CD8-positive, alpha-beta T cell (primary cell): ENCODE measurements at regions of chr19 and their contacts with region 1.

Region 1: GRCh38 chr19:48646001-48646721 is at the start of gene CA11:
- DNase-seq: peak; percentile 87 to 97 (median 92)
- ATAC-seq: peak; percentile 84
- H3K4me3 ChIP-seq: peak within 1 kb of the TSS; percentile 58 to 98
- H3K4me3 Mint-ChIP-seq: peak within 1 kb of the TSS; percentile 93
- H3K27ac ChIP-seq: peak within 1 kb of the TSS; percentile 80 to 88
- H3K27ac Mint-ChIP-seq: peak within 1 kb of the TSS; percentile 99
- H3K4me1 ChIP-seq: peaks cover 32% of the 10 kb centered on the region
- H3K4me1 Mint-ChIP-seq: peaks cover 47% of the 10 kb centered on the region
- H3K27me3 ChIP-seq: no peaks in the 10 kb centered on the region
- H3K27me3 Mint-ChIP-seq: no peaks in the 10 kb centered on the region
- CTCF ChIP-seq: peak; percentile 77
- total RNA-seq, gene CA11: 10.3 to 11.2 TPM

Region 2: GRCh38 chr19:48218997-48219396 is 427.2 kb before region 1 on chr19:
- CTCF ChIA-PET with region 1: no interaction called
- POLR2A ChIA-PET with region 1: no interaction called
- intact Hi-C with region 1: no loop called
- DNase-seq: no peak
- ATAC-seq: no peak
- H3K4me3 ChIP-seq: no peak overlapping the region
- H3K4me3 Mint-ChIP-seq: no peak overlapping the region
- H3K27ac ChIP-seq: no peak overlapping the region
- H3K27ac Mint-ChIP-seq: no peak overlapping the region
- H3K4me1 ChIP-seq: peaks cover 4% of the 10 kb centered on the region
- H3K4me1 Mint-ChIP-seq: peaks cover 14% of the 10 kb centered on the region
- H3K27me3 ChIP-seq: no peaks in the 10 kb centered on the region
- H3K27me3 Mint-ChIP-seq: no peaks in the 10 kb centered on the region
- CTCF ChIP-seq: no peak

Region 3: DNA sequence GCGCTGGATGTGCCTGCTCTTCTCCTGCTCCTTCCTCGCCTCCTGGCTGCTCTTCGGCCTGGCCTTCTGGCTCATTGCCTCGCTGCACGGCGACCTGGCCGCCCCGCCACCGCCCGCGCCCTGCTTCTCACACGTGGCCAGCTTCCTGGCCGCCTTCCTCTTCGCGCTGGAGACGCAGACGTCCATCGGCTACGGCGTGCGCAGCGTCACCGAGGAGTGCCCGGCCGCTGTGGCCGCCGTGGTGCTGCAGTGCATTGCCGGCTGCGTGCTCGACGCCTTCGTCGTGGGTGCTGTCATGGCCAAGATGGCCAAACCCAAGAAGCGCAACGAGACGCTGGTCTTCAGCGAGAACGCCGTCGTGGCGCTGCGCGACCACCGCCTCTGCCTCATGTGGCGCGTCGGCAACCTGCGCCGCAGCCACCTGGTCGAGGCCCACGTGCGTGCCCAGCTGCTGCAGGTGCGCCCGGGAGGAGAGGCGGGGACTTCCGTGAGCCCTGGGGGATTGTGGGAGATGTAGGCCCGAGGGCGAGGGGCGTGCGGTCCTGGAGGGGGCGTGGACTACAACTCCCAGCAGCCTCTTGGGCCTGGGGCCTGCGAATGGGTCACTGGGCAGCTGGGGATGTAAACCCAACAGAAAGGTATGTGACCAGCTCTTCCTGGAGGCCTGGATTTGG is 184.0 kb before region 1 on chr19:
- CTCF ChIA-PET with region 1: no interaction called
- POLR2A ChIA-PET with region 1: no interaction called
- intact Hi-C with region 1: no loop called
- DNase-seq: peak in 1 of 9 experiments; percentile 20
- ATAC-seq: no peak
- H3K4me3 ChIP-seq: no peak overlapping the region
- H3K4me3 Mint-ChIP-seq: no peak overlapping the region
- H3K27ac ChIP-seq: no peak overlapping the region
- H3K27ac Mint-ChIP-seq: no peak overlapping the region
- H3K4me1 ChIP-seq: no peaks in the 10 kb centered on the region
- H3K4me1 Mint-ChIP-seq: no peaks in the 10 kb centered on the region
- H3K27me3 ChIP-seq: no peaks in the 10 kb centered on the region
- H3K27me3 Mint-ChIP-seq: no peaks in the 10 kb centered on the region
- CTCF ChIP-seq: no peak

Region 4: GRCh38 chr19:48513289-48514122 is 132.7 kb before region 1 on chr19:
- CTCF ChIA-PET with region 1: no interaction called
- POLR2A ChIA-PET with region 1: no interaction called
- intact Hi-C with region 1: no loop called
- DNase-seq: peak in 8 of 9 experiments; percentile 61 to 88 (median 78)
- ATAC-seq: peak; percentile 58
- H3K4me3 ChIP-seq: peak overlapping the region; percentile 78 to 88
- H3K4me3 Mint-ChIP-seq: no peak overlapping the region
- H3K27ac ChIP-seq: peak overlapping the region; percentile 68 to 71
- H3K27ac Mint-ChIP-seq: peak overlapping the region; percentile 93
- H3K4me1 ChIP-seq: peaks cover 23% of the 10 kb centered on the region
- H3K4me1 Mint-ChIP-seq: peaks cover 18% of the 10 kb centered on the region
- H3K27me3 ChIP-seq: no peaks in the 10 kb centered on the region
- H3K27me3 Mint-ChIP-seq: no peaks in the 10 kb centered on the region
- CTCF ChIP-seq: no peak

Region 5: GRCh38 chr19:48558018-48558684 is 88.0 kb before region 1 on chr19:
- CTCF ChIA-PET with region 1: no interaction called
- POLR2A ChIA-PET with region 1: no interaction called
- intact Hi-C with region 1: no loop called
- DNase-seq: peak in 1 of 9 experiments; percentile 21
- ATAC-seq: no peak
- H3K4me3 ChIP-seq: no peak overlapping the region
- H3K4me3 Mint-ChIP-seq: no peak overlapping the region
- H3K27ac ChIP-seq: no peak overlapping the region
- H3K27ac Mint-ChIP-seq: no peak overlapping the region
- H3K4me1 ChIP-seq: no peaks in the 10 kb centered on the region
- H3K4me1 Mint-ChIP-seq: peaks cover 2% of the 10 kb centered on the region
- H3K27me3 ChIP-seq: no peaks in the 10 kb centered on the region
- H3K27me3 Mint-ChIP-seq: peaks cover 18% of the 10 kb centered on the region
- CTCF ChIP-seq: no peak

Region 6: DNA sequence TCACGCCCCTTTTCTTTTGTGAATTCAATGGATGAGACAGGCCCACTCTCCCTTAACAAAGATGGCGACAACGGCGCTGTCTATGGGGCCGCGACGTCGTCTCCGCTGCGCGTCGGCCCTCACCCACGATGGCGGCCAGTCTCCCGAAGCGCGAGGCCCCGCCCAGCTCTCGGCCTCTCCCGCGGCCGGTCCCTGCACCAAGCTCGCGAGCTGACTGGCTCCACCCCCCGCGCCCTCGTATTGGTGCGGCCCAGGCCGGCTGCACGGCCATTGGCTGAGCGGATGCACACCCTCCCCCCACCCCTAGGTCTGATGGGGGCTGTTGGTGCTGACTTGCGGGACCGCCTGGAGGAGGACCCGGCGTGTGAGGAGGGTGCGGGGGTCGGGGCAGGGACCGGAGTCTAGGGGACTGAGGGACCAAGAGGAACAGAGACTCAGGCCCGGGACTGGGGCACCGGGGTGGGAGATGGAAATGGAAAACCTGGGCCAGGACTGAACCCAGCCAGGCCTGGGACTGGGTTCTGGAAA is 22.0 kb before region 1 on chr19:
- CTCF ChIA-PET with region 1: interaction called, 6 read pairs
- POLR2A ChIA-PET with region 1: interaction called, 11 read pairs
- intact Hi-C with region 1: no loop called
- DNase-seq: peak; percentile 87 to 98 (median 95)
- ATAC-seq: peak; percentile 74
- H3K4me3 ChIP-seq: peak overlapping the region; percentile 36 to 40
- H3K4me3 Mint-ChIP-seq: peak overlapping the region; percentile 88
- H3K27ac ChIP-seq: peak overlapping the region; percentile 16 to 63
- H3K27ac Mint-ChIP-seq: peak overlapping the region; percentile 95
- H3K4me1 ChIP-seq: peaks cover 27% of the 10 kb centered on the region
- H3K4me1 Mint-ChIP-seq: peaks cover 48% of the 10 kb centered on the region
- H3K27me3 ChIP-seq: no peaks in the 10 kb centered on the region
- H3K27me3 Mint-ChIP-seq: no peaks in the 10 kb centered on the region
- CTCF ChIP-seq: no peak

Region 7: GRCh38 chr19:48713864-48714758 is 68.0 kb after region 1 on chr19:
- CTCF ChIA-PET with region 1: no interaction called
- POLR2A ChIA-PET with region 1: interaction called, 12 read pairs
- intact Hi-C with region 1: loop called (anchors 2 to 5 kb)
- DNase-seq: peak; percentile 94 to 99 (median 96)
- ATAC-seq: peak; percentile 95
- H3K4me3 ChIP-seq: peak overlapping the region; percentile 76 to 83
- H3K4me3 Mint-ChIP-seq: peak overlapping the region; percentile 85
- H3K27ac ChIP-seq: peak overlapping the region; percentile 45 to 70
- H3K27ac Mint-ChIP-seq: peak overlapping the region; percentile 73
- H3K4me1 ChIP-seq: peaks cover 20% of the 10 kb centered on the region
- H3K4me1 Mint-ChIP-seq: peaks cover 18% of the 10 kb centered on the region
- H3K27me3 ChIP-seq: no peaks in the 10 kb centered on the region
- H3K27me3 Mint-ChIP-seq: no peaks in the 10 kb centered on the region
- CTCF ChIP-seq: no peak

Region 8: GRCh38 chr19:48784540-48784939 is 138.4 kb after region 1 on chr19:
- CTCF ChIA-PET with region 1: interaction called, 18 read pairs
- POLR2A ChIA-PET with region 1: no interaction called
- intact Hi-C with region 1: loop called in 1 of 2 experiments (anchors 1 kb)
- DNase-seq: no peak
- ATAC-seq: no peak
- H3K4me3 ChIP-seq: no peak overlapping the region
- H3K4me3 Mint-ChIP-seq: no peak overlapping the region
- H3K27ac ChIP-seq: no peak overlapping the region
- H3K27ac Mint-ChIP-seq: no peak overlapping the region
- H3K4me1 ChIP-seq: peaks cover 3% of the 10 kb centered on the region
- H3K4me1 Mint-ChIP-seq: peaks cover 6% of the 10 kb centered on the region
- H3K27me3 ChIP-seq: no peaks in the 10 kb centered on the region
- H3K27me3 Mint-ChIP-seq: peaks cover 12% of the 10 kb centered on the region
- CTCF ChIP-seq: no peak

Region 9: DNA sequence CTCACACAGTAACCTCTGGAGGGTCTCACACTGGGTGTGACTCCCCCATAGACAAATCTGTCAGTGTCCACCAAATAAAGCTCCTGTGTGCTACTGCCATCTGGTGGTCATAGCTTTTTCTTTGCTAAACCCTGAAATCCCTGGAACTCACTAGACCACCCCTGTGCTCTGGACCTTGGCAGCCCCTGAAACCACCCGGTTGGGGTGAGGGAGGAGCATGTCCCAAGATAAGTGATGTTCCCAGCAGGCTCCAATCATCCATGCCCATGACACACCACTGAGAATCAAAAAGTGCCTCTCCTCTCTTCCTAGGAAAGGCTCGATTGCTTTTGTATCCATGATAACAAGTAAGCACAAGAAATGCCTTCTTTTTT is 196.6 kb after region 1 on chr19:
- CTCF ChIA-PET with region 1: interaction called, 18 read pairs
- POLR2A ChIA-PET with region 1: interaction called, 3 read pairs
- intact Hi-C with region 1: loop called (anchors 1 to 2 kb)
- DNase-seq: peak in 8 of 9 experiments; percentile 32 to 77 (median 56)
- ATAC-seq: peak; percentile 40
- H3K4me3 ChIP-seq: no peak overlapping the region
- H3K4me3 Mint-ChIP-seq: no peak overlapping the region
- H3K27ac ChIP-seq: no peak overlapping the region
- H3K27ac Mint-ChIP-seq: no peak overlapping the region
- H3K4me1 ChIP-seq: no peaks in the 10 kb centered on the region
- H3K4me1 Mint-ChIP-seq: peaks cover 3% of the 10 kb centered on the region
- H3K27me3 ChIP-seq: no peaks in the 10 kb centered on the region
- H3K27me3 Mint-ChIP-seq: no peaks in the 10 kb centered on the region
- CTCF ChIP-seq: peak; percentile 85

Region 10: DNA sequence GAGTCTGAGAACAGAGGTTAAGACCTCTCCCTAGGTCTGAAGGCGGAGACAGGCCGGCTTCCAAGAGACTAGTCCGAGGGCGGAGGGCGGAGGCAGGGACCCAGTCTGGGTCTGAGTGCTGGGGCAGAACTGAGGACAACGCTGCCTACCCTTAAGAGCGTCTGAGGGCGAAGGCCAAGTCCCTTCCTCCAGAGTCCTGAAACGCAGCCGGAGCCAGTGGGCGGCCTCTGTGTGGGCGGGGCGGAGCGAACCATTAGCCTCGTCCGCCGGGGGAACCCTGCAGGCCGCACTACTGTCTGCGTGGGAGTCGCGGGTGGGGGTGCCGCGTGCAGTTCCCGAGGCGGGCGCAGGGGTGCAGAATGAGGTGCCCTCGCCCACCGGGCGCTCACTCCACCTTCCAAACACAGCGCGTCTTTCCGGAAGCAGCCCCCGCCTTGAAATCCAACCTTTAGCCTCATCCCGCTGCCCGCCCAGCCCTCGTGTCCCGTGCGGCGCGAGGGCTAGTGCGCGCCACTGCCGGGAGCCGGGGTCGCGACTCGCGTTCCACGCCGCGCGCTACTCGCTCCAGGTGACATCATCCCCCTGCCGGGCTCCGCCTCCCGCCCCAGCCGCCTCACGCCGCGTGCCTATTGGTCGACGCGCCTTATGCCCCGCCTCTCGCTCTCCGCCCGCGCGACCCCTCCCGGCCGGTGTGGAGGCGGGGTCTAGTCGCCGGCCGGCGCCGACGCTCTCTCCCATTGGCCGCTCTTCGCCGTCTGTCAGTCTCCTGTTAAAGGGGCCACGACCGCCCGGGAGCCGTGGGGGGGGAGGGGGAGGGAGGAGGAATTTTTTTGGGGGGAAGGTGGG is 472.6 kb after region 1 on chr19 and contains the start of gene C19orf73:
- CTCF ChIA-PET with region 1: interaction called, 3 read pairs
- POLR2A ChIA-PET with region 1: no interaction called
- intact Hi-C with region 1: loop called in 1 of 2 experiments (anchors 1 kb)
- DNase-seq: peak; percentile 93 to 98 (median 94)
- ATAC-seq: peak; percentile 83
- H3K4me3 ChIP-seq: peak within 1 kb of the TSS; percentile 68 to 87
- H3K4me3 Mint-ChIP-seq: peak within 1 kb of the TSS; percentile 86
- H3K27ac ChIP-seq: peak within 1 kb of the TSS; percentile 84 to 98
- H3K27ac Mint-ChIP-seq: peak within 1 kb of the TSS; percentile 92
- H3K4me1 ChIP-seq: peaks cover 15% of the 10 kb centered on the region
- H3K4me1 Mint-ChIP-seq: peaks cover 36% of the 10 kb centered on the region
- H3K27me3 ChIP-seq: no peaks in the 10 kb centered on the region
- H3K27me3 Mint-ChIP-seq: no peaks in the 10 kb centered on the region
- CTCF ChIP-seq: peak; percentile 49
- total RNA-seq, gene C19orf73: 0.60 to 0.81 TPM